ENCODE measurements at regions of chr1 and their contacts with region 1.

Region 1: GRCh38 chr1:94481473-94481933 is 60.1 kb downstream of the F3 start:
- DNase-seq: peak; percentile 57
- H3K4me3 ChIP-seq: no peak overlapping the region; a peak in 1 of 4 replicates
- H3K27ac ChIP-seq: no peak overlapping the region; a peak in 1 of 4 replicates
- H3K4me1 ChIP-seq: no peaks in the 10 kb centered on the region
- H3K27me3 ChIP-seq: no peaks in the 10 kb centered on the region
- CTCF ChIP-seq: peak; percentile 84
- EP300 ChIP-seq: no peak
- RAD21 ChIP-seq: peak; percentile 74

Region 2: GRCh38 chr1:94463765-94464330 is 17.7 kb before region 1 on chr1:
- CTCF ChIA-PET with region 1: interaction called, 36 read pairs
- POLR2A ChIA-PET with region 1: no interaction called
- DNase-seq: peak; percentile 4
- H3K4me3 ChIP-seq: no peak overlapping the region
- H3K27ac ChIP-seq: no peak overlapping the region
- H3K4me1 ChIP-seq: no peaks in the 10 kb centered on the region
- H3K27me3 ChIP-seq: no peaks in the 10 kb centered on the region
- CTCF ChIP-seq: peak; percentile 53
- EP300 ChIP-seq: no peak
- RAD21 ChIP-seq: peak; percentile 70

Region 3: DNA sequence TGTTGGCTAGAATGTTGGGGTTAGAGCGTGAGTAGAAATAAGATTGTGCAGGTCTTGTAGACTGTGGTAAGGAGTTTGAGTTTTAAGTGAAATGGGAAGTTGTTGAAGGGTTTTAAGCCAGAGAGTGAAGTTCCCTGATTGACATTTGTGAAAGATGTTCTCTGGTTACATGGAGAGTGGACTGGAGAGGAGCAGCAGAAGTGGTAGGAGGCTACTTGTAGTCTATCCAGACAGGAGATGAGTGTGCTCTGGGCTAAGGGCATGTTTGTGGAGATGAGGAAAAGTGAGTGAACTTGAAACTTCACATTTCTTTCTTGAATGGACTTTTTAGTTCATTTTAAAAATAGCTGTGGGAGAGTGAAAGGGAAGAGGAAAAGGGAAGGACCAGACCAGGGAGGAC is 23.1 kb after region 1 on chr1:
- CTCF ChIA-PET with region 1: interaction called, 10 read pairs
- POLR2A ChIA-PET with region 1: no interaction called
- DNase-seq: no peak
- H3K4me3 ChIP-seq: no peak overlapping the region
- H3K27ac ChIP-seq: no peak overlapping the region
- H3K4me1 ChIP-seq: no peaks in the 10 kb centered on the region
- H3K27me3 ChIP-seq: no peaks in the 10 kb centered on the region
- CTCF ChIP-seq: no peak
- EP300 ChIP-seq: no peak
- RAD21 ChIP-seq: no peak

Measured in SK-N-SH (cell line).